ENCODE measurements at regions of chrX and their contacts with region 1.

Region 1: DNA sequence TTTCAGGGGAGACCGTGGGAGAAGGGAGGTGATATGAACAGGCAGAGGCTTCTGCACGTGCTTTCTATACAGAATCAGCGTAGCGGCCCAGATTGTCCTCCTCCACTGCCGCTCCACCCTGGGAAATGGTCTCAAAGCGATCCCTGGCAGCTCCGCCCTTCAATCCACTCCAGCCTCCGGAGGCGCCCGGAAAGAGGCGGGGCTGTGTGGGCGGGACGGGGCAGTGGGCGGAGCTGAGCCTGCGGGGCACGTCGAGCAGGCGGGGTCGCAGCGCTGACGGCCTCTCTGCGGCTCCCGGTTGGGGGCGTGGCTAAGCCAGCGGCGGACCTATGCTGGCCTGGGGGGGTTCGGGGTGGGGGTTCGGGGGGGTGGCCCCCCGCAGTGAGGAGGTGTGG is 210 bp upstream of the SMIM10L2A start:
- DNase-seq: peak; percentile 73 to 92 (median 86)
- ATAC-seq: peak; percentile 91
- H3K4me3 ChIP-seq: peak overlapping the region; percentile 36 to 41
- H3K4me3 Mint-ChIP-seq: peak overlapping the region; percentile 78
- H3K27ac ChIP-seq: no peak overlapping the region
- H3K27ac Mint-ChIP-seq: peak overlapping the region; percentile 47
- H3K4me1 ChIP-seq: no peaks in the 10 kb centered on the region
- H3K4me1 Mint-ChIP-seq: peaks cover 6% of the 10 kb centered on the region
- H3K27me3 ChIP-seq: no peaks in the 10 kb centered on the region
- H3K27me3 Mint-ChIP-seq: no peaks in the 10 kb centered on the region
- CTCF ChIP-seq: no peak

Region 2: DNA sequence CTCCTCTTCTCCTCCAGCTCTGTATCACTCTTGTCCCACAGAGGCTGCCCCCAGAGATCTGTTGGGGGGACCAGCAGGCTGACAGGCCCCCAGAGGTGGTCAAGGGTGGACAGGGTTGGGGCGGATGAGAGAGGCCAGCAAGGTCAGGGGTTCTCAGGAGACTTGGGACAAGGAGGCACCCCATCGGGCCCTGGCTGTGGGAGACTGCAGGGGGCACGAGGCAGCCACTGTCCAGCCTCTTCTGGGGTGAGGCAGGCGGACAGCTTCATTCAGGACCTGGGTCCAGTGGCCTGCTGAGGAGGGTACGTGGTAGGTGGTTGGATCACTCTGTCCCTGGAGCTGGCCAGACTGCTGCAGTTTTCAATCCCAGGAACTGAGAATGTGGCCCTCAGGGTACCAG is 325.8 kb before region 1 on chrX:
- CTCF ChIA-PET with region 1: no interaction called
- POLR2A ChIA-PET with region 1: interaction called, 3 read pairs
- intact Hi-C with region 1: loop called in 1 of 2 experiments (anchors 5 kb)
- DNase-seq: no peak
- ATAC-seq: no peak
- H3K4me3 ChIP-seq: no peak overlapping the region
- H3K4me3 Mint-ChIP-seq: no peak overlapping the region
- H3K27ac ChIP-seq: no peak overlapping the region
- H3K27ac Mint-ChIP-seq: no peak overlapping the region
- H3K4me1 ChIP-seq: peaks cover 4% of the 10 kb centered on the region
- H3K4me1 Mint-ChIP-seq: peaks cover 10% of the 10 kb centered on the region
- H3K27me3 ChIP-seq: no peaks in the 10 kb centered on the region
- H3K27me3 Mint-ChIP-seq: peaks cover 2% of the 10 kb centered on the region
- CTCF ChIP-seq: no peak

Region 3: GRCh38 chrX:135295238-135295943 is 126.1 kb before region 1 on chrX:
- CTCF ChIA-PET with region 1: no interaction called
- POLR2A ChIA-PET with region 1: no interaction called
- intact Hi-C with region 1: loop called in 1 of 2 experiments (anchors 2 kb)
- DNase-seq: peak; percentile 18 to 73 (median 60)
- ATAC-seq: peak; percentile 96
- H3K4me3 ChIP-seq: peak overlapping the region; percentile 65 to 68
- H3K4me3 Mint-ChIP-seq: peak overlapping the region; percentile 92
- H3K27ac ChIP-seq: peak overlapping the region; percentile 64 to 74
- H3K27ac Mint-ChIP-seq: peak overlapping the region; percentile 89
- H3K4me1 ChIP-seq: peaks cover 14% of the 10 kb centered on the region
- H3K4me1 Mint-ChIP-seq: peaks cover 25% of the 10 kb centered on the region
- H3K27me3 ChIP-seq: no peaks in the 10 kb centered on the region
- H3K27me3 Mint-ChIP-seq: no peaks in the 10 kb centered on the region
- CTCF ChIP-seq: no peak

Region 4: DNA sequence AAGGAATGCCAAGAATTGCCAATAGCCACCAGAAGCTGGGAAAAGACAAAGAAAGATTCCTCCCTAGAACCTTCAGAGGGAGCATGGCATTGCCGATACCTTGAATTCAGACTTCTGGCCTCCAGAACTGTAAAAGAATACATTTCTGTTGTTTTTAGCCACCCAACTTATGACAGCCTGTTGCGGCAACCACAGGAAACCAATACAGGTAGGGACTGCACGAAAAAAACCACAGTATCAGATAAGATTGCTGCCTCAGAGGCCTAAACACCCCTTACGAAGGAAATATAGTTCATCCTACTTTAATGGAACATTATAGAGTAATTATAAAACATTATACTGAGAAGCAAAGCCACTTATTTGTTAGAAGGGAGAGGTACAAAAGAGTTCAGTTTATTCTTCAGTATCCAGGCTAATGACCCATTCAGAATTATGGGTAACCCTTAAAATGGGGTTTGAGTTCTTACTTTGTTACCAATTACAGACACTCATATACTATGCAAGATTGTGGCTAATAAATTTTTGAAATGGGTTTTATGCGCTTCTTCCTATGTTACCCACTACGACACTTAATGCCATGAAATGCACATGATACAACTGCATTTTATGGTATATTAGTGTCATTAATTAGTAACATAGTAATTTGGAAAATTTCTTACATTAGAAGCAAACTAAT is 37.2 kb before region 1 on chrX:
- CTCF ChIA-PET with region 1: no interaction called
- POLR2A ChIA-PET with region 1: interaction called, 3 read pairs
- intact Hi-C with region 1: loop called in 1 of 2 experiments (anchors 1 kb)
- DNase-seq: peak; percentile 0 to 82 (median 30)
- ATAC-seq: peak; percentile 93
- H3K4me3 ChIP-seq: peak overlapping the region in 1 of 2 experiments; percentile 10
- H3K4me3 Mint-ChIP-seq: peak overlapping the region; percentile 66
- H3K27ac ChIP-seq: peak overlapping the region in 1 of 2 experiments; percentile 41
- H3K27ac Mint-ChIP-seq: peak overlapping the region; percentile 76
- H3K4me1 ChIP-seq: peaks cover 35% of the 10 kb centered on the region
- H3K4me1 Mint-ChIP-seq: peaks cover 42% of the 10 kb centered on the region
- H3K27me3 ChIP-seq: no peaks in the 10 kb centered on the region
- H3K27me3 Mint-ChIP-seq: no peaks in the 10 kb centered on the region
- CTCF ChIP-seq: no peak

Region 5: DNA sequence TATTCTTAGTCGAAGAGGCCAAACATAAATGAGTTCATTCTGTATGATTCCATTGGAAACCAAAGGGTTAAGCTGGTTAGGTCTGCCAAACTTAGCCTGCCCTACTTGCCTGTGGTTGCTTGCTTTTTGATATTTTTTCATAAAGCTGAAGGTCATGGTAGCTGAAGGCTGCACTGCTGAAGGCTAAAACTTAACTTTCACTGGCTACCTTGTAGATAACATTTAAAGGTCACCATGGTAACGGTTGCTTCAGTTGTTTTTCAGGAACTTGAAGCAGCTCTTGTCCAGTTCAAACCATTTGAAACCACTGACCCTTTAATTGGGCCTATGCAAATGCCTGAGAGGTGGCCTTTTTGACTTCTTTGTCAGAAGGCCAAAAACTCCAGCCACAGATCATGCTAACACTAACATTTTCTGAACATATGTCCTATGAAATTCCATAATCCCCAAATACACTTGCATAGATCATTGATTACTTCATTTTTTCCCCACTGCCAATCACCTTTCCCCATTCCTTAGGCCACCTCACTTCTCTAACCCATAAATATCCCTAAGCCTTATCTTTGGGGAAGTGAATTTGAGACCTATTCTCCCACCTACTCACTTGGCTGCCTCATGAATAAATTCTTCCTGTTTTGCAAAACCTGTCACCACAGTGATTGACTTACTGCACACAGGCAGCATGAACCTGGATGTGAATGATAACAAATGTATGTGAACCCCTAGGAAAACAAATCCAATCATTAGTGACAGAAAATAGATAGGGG is 10.5 kb before region 1 on chrX:
- CTCF ChIA-PET with region 1: no interaction called
- POLR2A ChIA-PET with region 1: no interaction called
- intact Hi-C with region 1: no loop called
- DNase-seq: no peak
- ATAC-seq: no peak
- H3K4me3 ChIP-seq: no peak overlapping the region
- H3K4me3 Mint-ChIP-seq: no peak overlapping the region
- H3K27ac ChIP-seq: no peak overlapping the region
- H3K27ac Mint-ChIP-seq: no peak overlapping the region
- H3K4me1 ChIP-seq: no peaks in the 10 kb centered on the region
- H3K4me1 Mint-ChIP-seq: peaks cover 6% of the 10 kb centered on the region
- H3K27me3 ChIP-seq: no peaks in the 10 kb centered on the region
- H3K27me3 Mint-ChIP-seq: no peaks in the 10 kb centered on the region
- CTCF ChIP-seq: no peak

Region 6: DNA sequence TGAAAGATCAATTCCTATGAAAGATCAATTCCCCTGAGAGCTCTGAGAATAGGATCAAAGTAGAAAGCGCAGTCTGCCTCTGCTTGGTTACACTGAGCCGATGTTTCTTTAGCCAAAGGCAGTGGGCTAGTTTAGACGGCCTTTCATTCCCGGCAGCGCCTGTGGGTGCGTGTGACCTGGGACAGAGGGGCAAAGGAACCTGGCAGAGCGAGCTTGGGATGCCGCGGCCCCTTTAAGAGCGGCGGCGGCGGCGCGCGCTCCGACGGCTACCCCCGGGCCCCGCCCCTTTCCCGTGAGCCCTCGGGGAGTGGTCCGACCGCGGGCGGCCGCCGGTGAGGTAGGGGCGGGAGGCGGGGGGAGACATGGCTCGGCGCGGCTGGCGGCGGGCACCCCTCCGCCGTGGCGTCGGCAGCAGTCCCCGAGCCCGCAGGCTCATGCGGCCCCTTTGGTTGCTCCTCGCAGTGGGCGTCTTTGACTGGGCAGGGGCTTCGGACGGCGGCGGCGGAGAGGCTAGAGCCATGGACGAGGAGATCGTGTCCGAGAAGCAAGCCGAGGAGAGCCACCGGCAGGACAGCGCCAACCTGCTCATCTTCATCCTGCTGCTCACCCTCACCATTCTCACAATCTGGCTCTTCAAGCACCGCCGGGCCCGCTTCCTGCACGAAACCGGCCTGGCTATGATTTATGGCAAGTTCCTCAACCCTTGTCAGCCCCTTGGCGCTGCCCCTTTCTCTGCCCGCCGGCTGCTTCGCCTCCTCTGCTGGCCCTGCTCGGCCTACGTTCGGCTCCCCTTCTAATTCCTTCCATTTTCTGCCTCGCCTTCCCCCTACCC is 563.8 kb after region 1 on chrX and contains the start of gene SLC9A6:
- CTCF ChIA-PET with region 1: no interaction called
- POLR2A ChIA-PET with region 1: no interaction called
- intact Hi-C with region 1: loop called in 1 of 2 experiments (anchors 10 kb)
- DNase-seq: peak in 8 of 9 experiments; percentile 46 to 80 (median 68)
- ATAC-seq: peak; percentile 88
- H3K4me3 ChIP-seq: peak within 1 kb of the TSS; percentile 71 to 83
- H3K4me3 Mint-ChIP-seq: peak within 1 kb of the TSS; percentile 91
- H3K27ac ChIP-seq: peak within 1 kb of the TSS; percentile 64 to 71
- H3K27ac Mint-ChIP-seq: peak within 1 kb of the TSS; percentile 93
- H3K4me1 ChIP-seq: peaks cover 26% of the 10 kb centered on the region
- H3K4me1 Mint-ChIP-seq: peaks cover 64% of the 10 kb centered on the region
- H3K27me3 ChIP-seq: no peaks in the 10 kb centered on the region
- H3K27me3 Mint-ChIP-seq: no peaks in the 10 kb centered on the region
- CTCF ChIP-seq: no peak
- total RNA-seq, gene SLC9A6: 15.9 to 18.7 TPM

Region 7: GRCh38 chrX:136541291-136541690 is 1119.8 kb after region 1 on chrX:
- CTCF ChIA-PET with region 1: no interaction called
- POLR2A ChIA-PET with region 1: no interaction called
- intact Hi-C with region 1: no loop called
- DNase-seq: no peak
- ATAC-seq: no peak
- H3K4me3 ChIP-seq: no peak overlapping the region
- H3K4me3 Mint-ChIP-seq: no peak overlapping the region
- H3K27ac ChIP-seq: no peak overlapping the region
- H3K27ac Mint-ChIP-seq: no peak overlapping the region
- H3K4me1 ChIP-seq: peaks cover 43% of the 10 kb centered on the region
- H3K4me1 Mint-ChIP-seq: peaks cover 37% of the 10 kb centered on the region
- H3K27me3 ChIP-seq: no peaks in the 10 kb centered on the region
- H3K27me3 Mint-ChIP-seq: peaks cover 3% of the 10 kb centered on the region
- CTCF ChIP-seq: no peak

Measured in CD8-positive, alpha-beta T cell (primary cell).